CD4-positive, alpha-beta memory T cell (primary cell): ENCODE measurements at regions of chr7 and their contacts with region 1.

Region 1: DNA sequence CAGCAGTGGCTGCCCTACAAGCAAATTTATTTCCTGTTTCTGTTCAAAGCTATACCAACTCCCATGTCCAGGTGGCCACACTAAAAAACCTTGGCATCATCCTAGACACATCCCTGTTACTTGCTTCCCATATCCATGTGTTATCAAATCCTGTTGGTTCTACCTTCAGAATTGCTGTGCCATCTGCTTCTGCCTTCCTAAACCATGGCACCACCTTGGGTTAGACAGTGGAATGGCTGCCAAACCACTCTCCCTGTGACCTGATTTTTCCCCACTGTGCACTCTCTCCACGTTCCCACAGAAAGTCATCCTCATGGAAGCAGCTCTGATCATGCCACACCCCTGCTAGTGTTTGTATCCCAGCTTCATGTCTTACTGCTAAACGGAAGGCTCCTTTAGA is 697.6 kb upstream of the GALNT17 start:
- DNase-seq: no peak
- H3K4me3 ChIP-seq: no peak overlapping the region
- H3K4me3 Mint-ChIP-seq: no peak overlapping the region
- H3K27ac ChIP-seq: no peak overlapping the region
- H3K27ac Mint-ChIP-seq: peak overlapping the region in 1 of 7 donors; percentile 44
- H3K4me1 ChIP-seq: no peaks in the 10 kb centered on the region
- H3K4me1 Mint-ChIP-seq: peaks cover 0 to 9% (median under 1%) of the 10 kb centered on the region in 4 donors
- H3K27me3 ChIP-seq: no peaks in the 10 kb centered on the region
- H3K27me3 Mint-ChIP-seq: no peaks in the 10 kb centered on the region

Region 2: GRCh38 chr7:70193514-70193913 is 240.9 kb before region 1 on chr7:
- CTCF ChIA-PET with region 1: no interaction called
- POLR2A ChIA-PET with region 1: no interaction called
- intact Hi-C with region 1: loop called (anchors 10 kb)
- DNase-seq: peak in 4 of 5 donors; percentile 16 to 34 (median 22)
- H3K4me3 ChIP-seq: no peak overlapping the region
- H3K4me3 Mint-ChIP-seq: no peak overlapping the region
- H3K27ac ChIP-seq: no peak overlapping the region
- H3K27ac Mint-ChIP-seq: no peak overlapping the region
- H3K4me1 ChIP-seq: no peaks in the 10 kb centered on the region
- H3K4me1 Mint-ChIP-seq: no peaks in the 10 kb centered on the region
- H3K27me3 ChIP-seq: no peaks in the 10 kb centered on the region
- H3K27me3 Mint-ChIP-seq: peaks cover 0 to 2% of the 10 kb centered on the region in 2 donors